ENCODE measurements at regions of chr1 and their contacts with region 1.

Region 1: DNA sequence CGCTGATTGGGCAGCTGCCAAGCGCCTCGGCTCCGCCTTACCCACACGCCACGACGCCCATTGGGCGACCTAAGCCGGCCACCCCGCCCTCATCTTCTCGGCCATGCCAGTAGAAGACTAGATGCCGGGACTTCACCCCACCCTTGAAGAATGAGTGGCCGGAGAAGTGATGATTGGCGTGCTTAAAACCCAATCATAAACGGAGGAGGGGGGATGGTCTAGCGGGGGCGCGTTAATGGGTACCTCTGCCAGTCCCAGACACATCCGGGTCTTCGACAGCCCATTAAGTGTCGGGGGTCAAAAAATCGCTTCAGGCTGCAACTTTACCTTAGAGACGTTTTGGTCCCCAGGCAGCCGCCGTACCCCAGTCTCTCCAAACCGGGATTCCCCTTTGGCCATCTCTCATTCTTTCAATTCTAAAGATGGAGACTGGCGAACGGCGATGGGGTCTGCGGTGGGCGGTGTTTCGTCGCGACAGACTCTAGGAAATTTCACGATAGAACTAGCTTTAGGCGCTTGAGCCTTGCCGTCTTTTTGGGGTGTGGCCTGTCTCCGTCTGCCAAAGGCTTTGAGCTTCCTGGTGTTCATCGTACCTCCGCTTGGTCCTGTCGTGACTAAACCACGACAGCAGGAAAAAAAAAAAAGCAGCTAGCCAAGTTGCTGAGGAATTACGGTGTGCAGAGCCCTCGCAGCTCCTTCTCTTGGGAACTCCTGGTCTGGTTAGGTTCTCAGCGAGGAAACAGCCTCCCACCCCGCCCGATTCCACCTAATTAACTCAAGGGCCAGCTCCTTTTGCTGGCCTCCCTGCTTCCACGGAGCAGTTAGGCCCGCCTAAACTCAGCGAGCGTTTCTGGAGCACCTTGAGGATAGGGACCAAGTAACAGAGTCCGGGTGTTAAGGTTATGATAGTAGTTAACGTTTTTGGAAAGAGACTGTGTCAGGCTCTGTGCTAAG is at the start of gene GATAD2B:
- DNase-seq: peak; percentile 92 to 100 (median 96)
- ATAC-seq: peak; percentile 94
- H3K4me3 ChIP-seq: peak within 1 kb of the TSS; percentile 86
- H3K27ac ChIP-seq: peak within 1 kb of the TSS; percentile 98
- H3K4me1 ChIP-seq: peaks cover 9 to 28% of the 10 kb centered on the region in 2 experiments
- H3K27me3 ChIP-seq: no peaks in the 10 kb centered on the region
- CTCF ChIP-seq: 0 out of 6 replicates have a peak, but pooled peaks of 1 of the 3 experiments have one; percentile 0
- EP300 ChIP-seq: 0 out of 2 replicates have a peak, but pooled peaks have one; percentile 8
- POLR2A ChIP-seq: peak; percentile 72
- RAD21 ChIP-seq: no peak
- polyA plus RNA-seq, gene GATAD2B: 1.5 to 6.6 TPM

Region 2: DNA sequence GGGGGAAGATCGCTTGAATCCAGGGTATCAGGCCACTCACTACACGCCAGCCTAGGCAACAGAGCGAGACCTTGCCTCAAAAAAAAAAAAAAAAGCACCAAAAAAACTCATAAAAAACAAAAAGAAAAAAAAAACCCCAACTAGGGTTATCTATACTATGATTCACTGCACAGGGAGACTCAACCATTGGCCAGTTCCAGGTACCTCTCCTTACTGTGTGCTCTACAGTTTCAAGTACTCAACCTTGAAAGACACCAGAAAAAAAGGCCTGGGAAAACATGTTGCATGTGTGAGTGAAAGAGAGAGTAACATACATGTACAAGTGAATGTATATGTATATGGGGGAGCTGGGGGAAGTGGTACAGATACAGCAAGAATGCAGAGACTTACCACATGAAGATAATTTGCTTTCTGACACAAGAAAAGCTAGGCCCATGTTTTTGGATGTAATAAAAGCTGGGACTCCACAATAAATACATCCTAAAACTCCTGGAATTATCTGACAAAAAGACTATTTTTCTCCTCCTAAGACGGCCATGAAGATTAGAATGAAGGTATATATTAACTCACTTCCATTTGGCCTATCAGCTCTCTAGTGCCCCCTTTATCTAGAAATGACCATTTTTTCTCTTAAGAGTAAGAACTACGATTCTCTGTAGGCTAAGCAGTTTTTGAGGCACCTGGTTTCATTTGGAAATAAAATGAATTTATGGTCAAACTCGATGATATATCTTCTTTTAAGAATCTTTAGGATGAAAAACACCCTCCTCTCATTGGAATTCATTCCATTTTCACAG is 95.9 kb before region 1 on chr1:
- CTCF ChIA-PET with region 1: no interaction called
- POLR2A ChIA-PET with region 1: no interaction called
- in situ Hi-C with region 1: no loop called
- intact Hi-C with region 1: loop called (anchors 5 kb)
- DNase-seq: no peak
- ATAC-seq: no peak
- H3K4me3 ChIP-seq: no peak overlapping the region
- H3K27ac ChIP-seq: no peak overlapping the region
- H3K4me1 ChIP-seq: no peaks in the 10 kb centered on the region; a peak in 1 of 5 replicates
- H3K27me3 ChIP-seq: no peaks in the 10 kb centered on the region
- CTCF ChIP-seq: peak in 1 of 3 experiments; percentile 17; a peak in 1 of 6 replicates
- EP300 ChIP-seq: no peak
- POLR2A ChIP-seq: no peak
- RAD21 ChIP-seq: no peak

Region 3: DNA sequence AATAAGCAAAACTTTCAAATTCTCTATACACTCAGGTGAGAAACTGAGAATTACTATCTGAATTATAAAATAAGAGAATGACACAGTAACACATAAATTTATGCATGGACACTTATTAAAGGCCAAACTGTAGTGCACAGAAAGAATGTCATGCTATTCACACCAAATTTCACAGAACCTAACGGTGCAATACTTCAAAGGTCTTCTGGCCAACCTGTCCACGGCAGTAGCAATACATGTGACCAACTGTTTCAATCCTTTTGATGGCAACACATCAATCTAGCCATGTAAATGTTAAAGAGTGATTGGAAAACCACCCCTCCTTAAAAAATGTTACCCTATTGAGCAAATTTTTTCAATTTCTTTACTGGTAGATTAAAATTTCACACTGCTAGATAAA is 10.9 kb before region 1 on chr1:
- CTCF ChIA-PET with region 1: no interaction called
- POLR2A ChIA-PET with region 1: interaction called, 12 read pairs
- in situ Hi-C with region 1: no loop called
- intact Hi-C with region 1: no loop called
- DNase-seq: no peak
- ATAC-seq: no peak
- H3K4me3 ChIP-seq: no peak overlapping the region
- H3K27ac ChIP-seq: no peak overlapping the region
- H3K4me1 ChIP-seq: no peaks in the 10 kb centered on the region
- H3K27me3 ChIP-seq: no peaks in the 10 kb centered on the region
- CTCF ChIP-seq: no peak
- EP300 ChIP-seq: no peak
- POLR2A ChIP-seq: no peak
- RAD21 ChIP-seq: no peak

Region 4: GRCh38 chr1:153977250-153978240 is 54.3 kb after region 1 on chr1 and contains the start of gene JTB:
- CTCF ChIA-PET with region 1: no interaction called
- POLR2A ChIA-PET with region 1: interaction called, 6 read pairs
- in situ Hi-C with region 1: no loop called
- intact Hi-C with region 1: loop called (anchors 2 kb)
- DNase-seq: peak; percentile 83 to 93 (median 84)
- ATAC-seq: peak; percentile 90
- H3K4me3 ChIP-seq: peak within 1 kb of the TSS; percentile 84
- H3K27ac ChIP-seq: peak within 1 kb of the TSS; percentile 91
- H3K4me1 ChIP-seq: peaks cover 13 to 17% of the 10 kb centered on the region in 2 experiments; a peak in 4 of 5 replicates
- H3K27me3 ChIP-seq: no peaks in the 10 kb centered on the region
- CTCF ChIP-seq: 0 out of 6 replicates have a peak, but pooled peaks of 1 of the 3 experiments have one; percentile 4
- EP300 ChIP-seq: peak; percentile 22; the same call in 1 of the 2 replicates
- POLR2A ChIP-seq: peak; percentile 83
- RAD21 ChIP-seq: 0 out of 4 replicates have a peak, but pooled peaks of 1 of the 2 experiments have one; percentile 2
- polyA plus RNA-seq, gene JTB: 24.7 to 36.7 TPM

Region 5: GRCh38 chr1:154320882-154321608 is 397.8 kb after region 1 on chr1 and contains the start of gene AQP10:
- CTCF ChIA-PET with region 1: no interaction called
- POLR2A ChIA-PET with region 1: no interaction called
- in situ Hi-C with region 1: no loop called
- intact Hi-C with region 1: no loop called
- DNase-seq: peak; percentile 58 to 93 (median 73)
- ATAC-seq: peak; percentile 91
- H3K4me3 ChIP-seq: peak within 1 kb of the TSS; percentile 31
- H3K27ac ChIP-seq: peak within 1 kb of the TSS; percentile 85
- H3K4me1 ChIP-seq: peaks cover 27 to 40% of the 10 kb centered on the region in 2 experiments; a peak in 4 of 5 replicates
- H3K27me3 ChIP-seq: no peaks in the 10 kb centered on the region
- CTCF ChIP-seq: peak; percentile 20 to 32 (median 30); a peak in 2 of 6 replicates
- EP300 ChIP-seq: peak; percentile 77
- POLR2A ChIP-seq: peak; percentile 67
- RAD21 ChIP-seq: peak; percentile 27 to 40; a peak in 2 of 4 replicates
- polyA plus RNA-seq, gene AQP10: 0.37 to 0.56 TPM

Measured in K562 (cell line).